GM10248 (cell line): ENCODE measurements at regions of chr17 and their contacts with region 1.

Region 1: DNA sequence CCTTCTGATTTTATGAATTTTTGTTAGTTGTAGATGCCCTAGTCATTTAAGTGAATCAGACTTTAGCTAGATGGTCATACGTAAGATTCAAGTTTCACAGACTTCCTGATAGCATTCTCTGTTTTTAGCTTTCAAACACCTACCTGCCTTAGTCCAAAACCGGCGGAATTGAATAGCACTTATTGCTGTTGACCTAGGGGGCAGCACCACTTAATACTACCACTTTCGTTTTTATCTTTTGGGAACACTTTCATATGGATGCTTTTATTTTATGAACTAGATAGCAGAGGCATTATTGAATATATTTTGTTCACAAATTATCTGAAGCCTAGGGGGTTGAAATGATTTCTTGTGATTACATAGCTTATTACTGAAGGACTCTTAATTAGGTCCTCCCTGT is 31.5 kb downstream of the TADA2A start:
- DNase-seq: no peak
- CTCF ChIP-seq: no peak

Region 2: GRCh38 chr17:37422971-37423625 is 15.0 kb before region 1 on chr17:
- CTCF ChIA-PET with region 1: interaction called, 28 read pairs
- POLR2A ChIA-PET with region 1: no interaction called
- DNase-seq: no peak
- CTCF ChIP-seq: no peak

Region 3: GRCh38 chr17:37458805-37459204 is 20.7 kb after region 1 on chr17:
- CTCF ChIA-PET with region 1: interaction called, 11 read pairs
- POLR2A ChIA-PET with region 1: no interaction called
- DNase-seq: no peak
- CTCF ChIP-seq: no peak